Endothelial cell of umbilical vein (primary cell): ENCODE measurements at regions of chr18 and their contacts with region 1.

Region 1: GRCh38 chr18:49510393-49511115 is 23.5 kb upstream of the C18orf32 start:
- DNase-seq: peak; percentile 51
- H3K4me3 ChIP-seq: no peak overlapping the region
- H3K27ac ChIP-seq: no peak overlapping the region
- H3K4me1 ChIP-seq: no peaks in the 10 kb centered on the region
- H3K27me3 ChIP-seq: peaks cover 3 to 4% of the 10 kb centered on the region in 2 experiments
- CTCF ChIP-seq: peak; percentile 74 to 81
- POLR2A ChIP-seq: no peak

Region 2: GRCh38 chr18:49495076-49495475 is 15.5 kb before region 1 on chr18:
- CTCF ChIA-PET with region 1: interaction called, 15 read pairs
- POLR2A ChIA-PET with region 1: no interaction called
- dilution Hi-C with region 1: no loop called
- intact Hi-C with region 1: no loop called
- DNase-seq: no peak
- H3K4me3 ChIP-seq: no peak overlapping the region
- H3K27ac ChIP-seq: peak overlapping the region; percentile 32
- H3K4me1 ChIP-seq: peaks cover 21% of the 10 kb centered on the region
- H3K27me3 ChIP-seq: no peaks in the 10 kb centered on the region
- CTCF ChIP-seq: no peak
- POLR2A ChIP-seq: no peak

Region 3: DNA sequence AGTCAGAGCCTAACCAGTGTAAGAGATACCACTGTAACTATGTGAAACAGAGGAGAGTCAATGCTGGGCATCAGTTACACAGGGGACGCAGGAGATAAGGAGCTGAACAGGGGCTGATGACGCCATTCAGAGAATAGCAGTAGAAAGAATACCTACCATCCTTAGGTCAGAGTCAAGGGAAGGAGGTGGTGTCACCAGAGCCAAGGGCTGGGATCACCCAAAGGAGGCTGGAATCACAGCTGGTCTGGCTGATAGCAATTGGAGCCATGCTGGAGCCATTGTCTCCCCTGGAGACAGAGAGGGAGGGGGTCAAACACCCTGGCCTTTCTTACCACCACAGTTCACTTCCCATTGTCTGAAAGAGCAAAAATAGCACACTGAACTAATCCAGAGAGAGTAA is 13.8 kb after region 1 on chr18:
- CTCF ChIA-PET with region 1: interaction called, 28 read pairs
- POLR2A ChIA-PET with region 1: no interaction called
- dilution Hi-C with region 1: no loop called
- intact Hi-C with region 1: no loop called
- DNase-seq: peak; percentile 5
- H3K4me3 ChIP-seq: no peak overlapping the region
- H3K27ac ChIP-seq: no peak overlapping the region
- H3K4me1 ChIP-seq: no peaks in the 10 kb centered on the region
- H3K27me3 ChIP-seq: peaks cover 0 to 3% of the 10 kb centered on the region in 2 experiments
- CTCF ChIP-seq: no peak
- POLR2A ChIP-seq: no peak

Region 4: GRCh38 chr18:49561289-49562193 is 51.0 kb after region 1 on chr18 and contains the start of gene LIPG:
- CTCF ChIA-PET with region 1: interaction called, 19 read pairs
- POLR2A ChIA-PET with region 1: no interaction called
- dilution Hi-C with region 1: no loop called
- intact Hi-C with region 1: loop called (anchors 1 kb)
- DNase-seq: peak; percentile 74
- H3K4me3 ChIP-seq: peak within 1 kb of the TSS; percentile 34 to 83 (median 67)
- H3K27ac ChIP-seq: peak within 1 kb of the TSS; percentile 49
- H3K4me1 ChIP-seq: peaks cover 37% of the 10 kb centered on the region
- H3K27me3 ChIP-seq: no peaks in the 10 kb centered on the region
- CTCF ChIP-seq: no peak
- POLR2A ChIP-seq: peak; percentile 69
- total RNA-seq, gene LIPG: 80.6 and 96.2 TPM in 2 replicates

Region 5: GRCh38 chr18:49690307-49690706 is 179.8 kb after region 1 on chr18:
- CTCF ChIA-PET with region 1: no interaction called
- POLR2A ChIA-PET with region 1: no interaction called
- dilution Hi-C with region 1: no loop called
- intact Hi-C with region 1: no loop called
- DNase-seq: peak; percentile 78
- H3K4me3 ChIP-seq: peak overlapping the region in 1 of 3 experiments; percentile 34
- H3K27ac ChIP-seq: peak overlapping the region; percentile 97
- H3K4me1 ChIP-seq: peaks cover 48% of the 10 kb centered on the region
- H3K27me3 ChIP-seq: no peaks in the 10 kb centered on the region
- CTCF ChIP-seq: no peak
- POLR2A ChIP-seq: no peak

Region 6: GRCh38 chr18:49768051-49768391 is 257.5 kb after region 1 on chr18:
- CTCF ChIA-PET with region 1: interaction called, 46 read pairs
- POLR2A ChIA-PET with region 1: no interaction called
- dilution Hi-C with region 1: no loop called
- intact Hi-C with region 1: loop called (anchors 1 kb)
- DNase-seq: peak; percentile 62
- H3K4me3 ChIP-seq: no peak overlapping the region
- H3K27ac ChIP-seq: no peak overlapping the region
- H3K4me1 ChIP-seq: no peaks in the 10 kb centered on the region
- H3K27me3 ChIP-seq: no peaks in the 10 kb centered on the region
- CTCF ChIP-seq: peak; percentile 69 to 75
- POLR2A ChIP-seq: no peak

Region 7: DNA sequence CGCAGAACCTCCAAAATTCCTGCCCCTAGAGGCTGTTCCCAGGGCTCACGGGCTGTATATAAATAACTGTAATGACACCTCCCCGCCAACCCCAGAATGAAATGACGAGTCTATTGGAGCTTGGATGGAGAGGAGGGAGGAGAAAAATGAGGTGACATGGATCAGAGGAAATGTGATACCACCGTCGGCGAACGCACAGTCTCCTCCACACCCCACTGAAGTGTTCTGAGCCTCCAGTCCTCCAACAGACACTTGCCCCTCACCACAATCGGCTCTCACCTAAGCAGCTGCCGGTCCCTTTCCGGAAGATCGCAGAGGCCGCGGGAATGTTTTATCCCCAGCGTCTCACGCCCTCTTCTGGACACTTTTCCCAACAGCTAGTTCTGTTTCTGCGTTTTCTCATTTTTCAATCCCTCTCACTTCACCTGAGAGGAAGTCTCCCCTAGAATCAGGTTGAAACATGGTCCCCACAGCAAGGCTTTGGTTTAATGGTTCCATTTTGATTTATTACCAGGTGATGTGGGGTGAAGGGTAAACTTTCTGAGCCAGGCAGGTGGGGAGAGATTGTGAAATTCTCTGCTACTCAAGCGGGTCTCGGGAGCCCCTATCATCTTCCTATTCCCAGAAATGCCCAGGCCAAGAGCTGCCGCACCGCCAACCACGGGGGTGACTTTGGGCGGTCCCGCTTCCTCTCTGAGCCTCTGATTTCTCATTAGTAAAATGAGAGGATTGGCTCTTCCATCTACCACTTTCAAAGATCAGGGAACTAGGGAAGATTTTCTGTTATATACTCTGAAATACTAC is 693.4 kb after region 1 on chr18:
- CTCF ChIA-PET with region 1: interaction called, 20 read pairs
- POLR2A ChIA-PET with region 1: no interaction called
- dilution Hi-C with region 1: no loop called
- intact Hi-C with region 1: loop called (anchors 10 kb)
- DNase-seq: peak; percentile 24
- H3K4me3 ChIP-seq: no peak overlapping the region
- H3K27ac ChIP-seq: no peak overlapping the region
- H3K4me1 ChIP-seq: no peaks in the 10 kb centered on the region
- H3K27me3 ChIP-seq: peaks cover 0 to 10% of the 10 kb centered on the region in 2 experiments
- CTCF ChIP-seq: peak; percentile 50 to 66
- POLR2A ChIP-seq: no peak